ENCODE measurements at regions of chr11 and their contacts with region 1.

Region 1: DNA sequence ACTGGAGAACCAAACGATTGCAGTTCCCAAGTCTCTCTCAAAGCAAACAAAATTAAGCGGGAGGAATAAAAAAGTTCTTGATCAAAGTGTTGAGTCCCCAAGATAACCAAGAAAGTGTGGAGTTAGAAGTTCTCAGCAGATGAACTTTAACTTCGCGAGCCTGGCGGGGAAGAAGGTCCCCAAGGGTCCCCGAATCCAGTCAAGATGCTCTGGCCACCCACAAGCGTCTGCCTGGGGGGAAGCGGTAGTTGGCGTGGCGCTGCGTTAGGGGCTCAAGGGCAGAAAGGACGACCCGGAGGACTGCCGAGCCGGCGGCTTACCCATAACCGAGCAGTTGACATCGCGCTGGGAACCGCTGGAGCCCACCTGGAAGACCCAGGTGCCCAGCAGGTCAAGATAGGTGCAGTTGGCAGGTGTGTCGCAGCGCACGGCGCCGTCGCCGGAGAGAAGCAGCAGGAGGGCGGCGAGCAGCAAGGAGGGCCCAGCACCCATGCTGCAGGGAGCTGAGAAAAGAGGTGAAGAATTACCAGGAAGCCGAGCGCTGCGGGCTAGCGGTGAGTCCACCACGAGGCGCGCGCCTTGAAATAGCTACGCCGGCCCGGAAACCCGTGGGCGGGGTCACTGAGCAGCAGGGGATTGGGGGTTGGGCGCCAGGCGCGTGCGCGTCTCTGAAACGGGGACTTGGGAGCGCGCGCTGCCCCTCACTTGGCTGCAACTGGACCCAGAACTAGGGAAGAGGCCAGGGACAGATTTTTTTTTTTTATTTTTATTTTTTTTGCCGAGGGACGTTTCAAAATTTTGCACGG is at the start of gene CTSC:
- DNase-seq: peak; percentile 89 to 91
- H3K4me3 ChIP-seq: peak within 1 kb of the TSS; percentile 87
- H3K27ac ChIP-seq: peak within 1 kb of the TSS; percentile 73
- H3K4me1 ChIP-seq: peaks cover 37% of the 10 kb centered on the region
- H3K27me3 ChIP-seq: no peaks in the 10 kb centered on the region
- CTCF ChIP-seq: no peak; the same call in 1 of the 2 replicates
- total RNA-seq, gene CTSC: 119 and 124 TPM in 2 replicates

Region 2: DNA sequence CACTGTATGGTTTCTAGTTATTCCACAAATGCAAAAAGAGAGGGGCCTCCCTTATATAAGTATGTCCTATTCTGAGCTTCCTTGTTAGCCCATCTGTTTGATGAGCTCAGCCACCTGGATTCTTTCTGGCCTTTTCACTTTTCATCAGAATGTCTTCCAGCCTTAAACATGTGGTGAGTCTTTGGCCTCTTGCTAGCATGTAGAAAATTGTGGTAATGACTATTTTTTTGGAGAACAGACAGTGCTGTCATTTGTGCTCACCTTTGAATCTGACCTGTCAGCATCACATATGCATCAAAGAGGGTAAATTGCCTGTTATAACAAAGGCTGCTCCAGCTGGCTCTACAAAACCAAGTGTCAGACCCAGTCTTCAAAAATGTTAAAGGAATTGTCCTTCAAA is 720.9 kb before region 1 on chr11:
- CTCF ChIA-PET with region 1: no interaction called
- POLR2A ChIA-PET with region 1: no interaction called
- intact Hi-C with region 1: no loop called
- DNase-seq: no peak
- H3K4me3 ChIP-seq: no peak overlapping the region
- H3K27ac ChIP-seq: no peak overlapping the region
- H3K4me1 ChIP-seq: no peaks in the 10 kb centered on the region
- H3K27me3 ChIP-seq: no peaks in the 10 kb centered on the region
- CTCF ChIP-seq: no peak

Region 3: GRCh38 chr11:88016392-88017170 is 320.8 kb before region 1 on chr11:
- CTCF ChIA-PET with region 1: no interaction called
- POLR2A ChIA-PET with region 1: interaction called, 14 read pairs
- intact Hi-C with region 1: no loop called
- DNase-seq: peak; percentile 62 to 79
- H3K4me3 ChIP-seq: no peak overlapping the region
- H3K27ac ChIP-seq: no peak overlapping the region
- H3K4me1 ChIP-seq: 0 out of 2 replicates have a peak, but pooled peaks cover 2% of the 10 kb centered on the region
- H3K27me3 ChIP-seq: no peaks in the 10 kb centered on the region
- CTCF ChIP-seq: peak; percentile 95

Region 4: DNA sequence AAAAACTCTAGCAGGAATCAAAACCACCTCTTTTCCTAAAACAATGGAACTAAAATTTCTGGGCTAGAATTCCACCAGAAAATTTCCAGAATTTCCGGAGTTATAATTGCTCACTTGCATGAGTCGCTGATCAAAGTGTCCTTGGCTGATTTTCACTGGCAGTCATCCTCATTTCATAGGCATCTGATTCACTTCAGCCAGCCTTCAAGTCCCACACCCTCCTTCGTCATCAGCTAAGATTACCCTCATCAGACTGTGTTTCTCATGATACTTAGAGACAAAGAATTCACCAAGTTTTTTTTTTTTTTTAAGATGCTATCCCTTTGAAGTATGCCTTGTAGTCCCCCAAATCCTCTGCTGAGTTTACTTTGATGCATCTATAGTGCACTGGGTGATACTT is 90.7 kb before region 1 on chr11:
- CTCF ChIA-PET with region 1: no interaction called
- POLR2A ChIA-PET with region 1: no interaction called
- intact Hi-C with region 1: no loop called
- DNase-seq: no peak
- H3K4me3 ChIP-seq: no peak overlapping the region
- H3K27ac ChIP-seq: no peak overlapping the region
- H3K4me1 ChIP-seq: no peaks in the 10 kb centered on the region
- H3K27me3 ChIP-seq: no peaks in the 10 kb centered on the region
- CTCF ChIP-seq: no peak

Region 5: GRCh38 chr11:88384673-88385005 is 47.3 kb after region 1 on chr11:
- CTCF ChIA-PET with region 1: no interaction called
- POLR2A ChIA-PET with region 1: interaction called, 4 read pairs
- intact Hi-C with region 1: loop called (anchors 5 kb)
- DNase-seq: peak; percentile 36 to 85
- H3K4me3 ChIP-seq: peak overlapping the region; percentile 37; the same call in 1 of the 2 replicates
- H3K27ac ChIP-seq: peak overlapping the region; percentile 44
- H3K4me1 ChIP-seq: peaks cover 52% of the 10 kb centered on the region
- H3K27me3 ChIP-seq: no peaks in the 10 kb centered on the region
- CTCF ChIP-seq: no peak

Region 6: DNA sequence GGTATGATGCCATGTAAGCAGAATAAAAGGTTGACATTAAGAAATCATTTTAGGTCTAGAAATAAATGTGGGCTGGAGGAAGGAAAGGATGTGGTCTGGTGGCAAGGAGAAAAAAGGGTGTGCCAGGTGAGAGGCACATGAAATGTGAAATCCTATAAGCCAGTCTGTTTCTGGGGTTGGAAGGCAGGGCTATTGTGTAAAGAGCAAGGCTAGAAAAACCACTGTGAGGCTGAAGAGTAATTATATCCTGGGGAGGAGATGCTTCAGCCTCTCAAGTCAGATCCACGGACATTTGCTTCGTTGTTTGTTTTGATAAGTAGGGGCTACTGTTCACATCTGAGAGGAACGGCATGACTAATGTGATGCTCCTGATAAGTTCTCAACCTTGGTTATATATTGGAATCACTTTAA is 77.6 kb after region 1 on chr11:
- CTCF ChIA-PET with region 1: no interaction called
- POLR2A ChIA-PET with region 1: no interaction called
- intact Hi-C with region 1: loop called (anchors 5 kb)
- DNase-seq: peak; percentile 22 to 87
- H3K4me3 ChIP-seq: no peak overlapping the region
- H3K27ac ChIP-seq: peak overlapping the region; percentile 63
- H3K4me1 ChIP-seq: peaks cover 67% of the 10 kb centered on the region
- H3K27me3 ChIP-seq: no peaks in the 10 kb centered on the region
- CTCF ChIP-seq: no peak

Region 7: DNA sequence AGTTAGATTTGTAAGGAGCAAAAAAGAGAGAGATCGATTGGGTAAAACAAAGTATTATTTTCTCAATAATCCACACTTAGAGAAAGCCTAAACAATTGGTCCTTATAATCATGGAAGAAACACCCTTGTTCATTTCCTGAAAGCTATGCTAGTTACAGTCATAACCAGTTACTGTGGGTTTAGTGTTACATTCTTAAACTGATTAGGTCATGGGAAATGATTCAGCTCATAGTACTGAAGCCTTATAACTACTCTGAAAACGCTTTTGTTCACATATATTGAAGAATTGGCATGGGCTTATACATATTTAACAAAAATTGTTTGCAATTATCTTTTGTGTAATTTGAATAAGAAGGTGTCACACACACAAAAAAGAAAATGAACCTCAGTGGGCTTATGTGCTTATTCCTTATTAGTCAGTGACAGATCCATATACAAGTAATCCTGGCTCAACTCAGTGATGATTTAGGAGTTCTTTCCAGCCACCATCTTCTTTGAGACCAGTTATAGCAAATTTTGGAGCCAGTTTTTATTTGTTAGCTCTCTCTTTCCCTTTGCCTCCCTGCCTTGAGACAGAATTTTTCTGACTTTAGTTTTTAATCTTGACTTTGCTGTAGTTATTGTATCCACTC is 198.6 kb after region 1 on chr11:
- CTCF ChIA-PET with region 1: no interaction called
- POLR2A ChIA-PET with region 1: interaction called, 5 read pairs
- intact Hi-C with region 1: loop called (anchors 1 kb)
- DNase-seq: peak in 1 of 2 experiments; percentile 90
- H3K4me3 ChIP-seq: no peak overlapping the region; the same call in 1 of the 2 replicates
- H3K27ac ChIP-seq: peak overlapping the region; percentile 83
- H3K4me1 ChIP-seq: peaks cover 42% of the 10 kb centered on the region
- H3K27me3 ChIP-seq: no peaks in the 10 kb centered on the region
- CTCF ChIP-seq: no peak

Measured in PC-9 (cell line).